ENCODE measurements at regions of chr2 and their contacts with region 1.

Region 1: GRCh38 chr2:181457121-181457740 is at the start of gene ITGA4:
- DNase-seq: peak; percentile 94 to 98 (median 97)
- H3K4me3 ChIP-seq: peak within 1 kb of the TSS; percentile 85 to 100 (median 98)
- H3K27ac ChIP-seq: peak within 1 kb of the TSS; percentile 93 to 97
- H3K4me1 ChIP-seq: peaks cover 31 to 51% (median 35%) of the 10 kb centered on the region in 4 experiments
- H3K27me3 ChIP-seq: no peaks in the 10 kb centered on the region

Region 2: DNA sequence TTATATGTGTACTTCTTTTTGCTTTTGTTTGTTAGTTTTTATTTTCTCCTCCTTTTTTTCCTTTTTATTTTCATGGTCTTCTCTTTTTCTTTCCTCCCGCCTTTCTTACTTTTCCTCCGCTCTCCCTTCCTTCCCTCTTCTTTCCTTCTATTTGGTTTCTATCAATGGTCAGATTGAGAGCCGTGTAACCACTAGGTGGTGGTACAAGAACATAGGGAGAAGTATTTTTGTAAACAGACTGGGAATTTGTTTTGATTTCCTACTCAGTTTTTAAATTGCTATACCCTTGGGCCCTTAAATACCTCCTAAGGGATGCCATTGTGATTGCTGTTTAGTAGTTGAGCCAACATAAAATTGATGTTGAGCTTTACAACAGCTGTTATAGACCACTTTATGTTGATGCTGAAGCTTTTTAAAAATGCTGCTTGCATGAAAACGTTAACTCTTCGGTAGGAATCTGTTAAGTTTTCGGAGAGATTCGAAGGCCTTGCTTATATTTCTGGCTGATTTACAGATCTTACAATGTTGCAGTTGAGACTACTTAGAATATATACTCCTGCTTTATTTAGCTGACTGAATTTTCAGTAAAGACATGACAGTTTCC is 352.6 kb before region 1 on chr2:
- CTCF ChIA-PET with region 1: interaction called, 12 read pairs
- POLR2A ChIA-PET with region 1: no interaction called
- DNase-seq: peak; percentile 60 to 71 (median 62)
- H3K4me3 ChIP-seq: peak overlapping the region in 2 of 7 experiments; percentile 8 to 53
- H3K27ac ChIP-seq: no peak overlapping the region
- H3K4me1 ChIP-seq: peaks cover 3 to 25% (median 9%) of the 10 kb centered on the region in 4 experiments
- H3K27me3 ChIP-seq: no peaks in the 10 kb centered on the region

Region 3: DNA sequence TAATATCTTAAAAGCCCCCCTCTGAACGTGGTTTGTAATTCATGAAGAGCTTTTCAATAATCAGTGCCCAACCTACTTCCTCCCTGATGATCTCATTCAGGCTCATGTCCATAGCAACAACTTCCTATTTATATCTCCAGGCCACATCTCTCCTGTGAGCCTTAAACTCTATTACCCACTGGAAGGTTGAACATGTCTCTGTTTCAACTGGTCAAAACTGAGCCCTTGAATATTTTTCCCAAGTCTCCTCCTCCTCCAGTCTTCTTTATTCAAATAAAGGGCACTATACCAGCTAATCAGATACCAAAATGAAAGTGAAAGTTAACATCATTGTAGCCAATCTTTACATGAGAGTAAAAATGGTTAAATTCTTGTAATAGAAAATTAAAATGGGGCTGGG is 63.8 kb before region 1 on chr2:
- CTCF ChIA-PET with region 1: interaction called, 10 read pairs
- POLR2A ChIA-PET with region 1: no interaction called
- DNase-seq: peak; percentile 82 to 93 (median 87)
- H3K4me3 ChIP-seq: peak overlapping the region in 3 of 7 experiments; percentile 8 to 55 (median 46)
- H3K27ac ChIP-seq: peak overlapping the region; percentile 75 to 90
- H3K4me1 ChIP-seq: peaks cover 10 to 37% (median 26%) of the 10 kb centered on the region in 4 experiments
- H3K27me3 ChIP-seq: no peaks in the 10 kb centered on the region

Region 4: GRCh38 chr2:181430406-181431118 is 26.7 kb before region 1 on chr2:
- CTCF ChIA-PET with region 1: interaction called, 17 read pairs
- POLR2A ChIA-PET with region 1: interaction called, 4 read pairs
- DNase-seq: peak; percentile 47 to 91 (median 86)
- H3K4me3 ChIP-seq: no peak overlapping the region
- H3K27ac ChIP-seq: peak overlapping the region in 1 of 2 experiments; percentile 44
- H3K4me1 ChIP-seq: peaks cover 0 to 19% (median 10%) of the 10 kb centered on the region in 4 experiments
- H3K27me3 ChIP-seq: no peaks in the 10 kb centered on the region

Region 5: GRCh38 chr2:181438261-181438660 is 19.0 kb before region 1 on chr2:
- CTCF ChIA-PET with region 1: interaction called, 35 read pairs
- POLR2A ChIA-PET with region 1: interaction called, 4 read pairs
- DNase-seq: peak; percentile 38 to 54 (median 46)
- H3K4me3 ChIP-seq: no peak overlapping the region
- H3K27ac ChIP-seq: no peak overlapping the region
- H3K4me1 ChIP-seq: peaks cover 10 to 34% (median 13%) of the 10 kb centered on the region in 4 experiments
- H3K27me3 ChIP-seq: no peaks in the 10 kb centered on the region